ENCODE measurements at regions of chr1 and their contacts with region 1.

Region 1: DNA sequence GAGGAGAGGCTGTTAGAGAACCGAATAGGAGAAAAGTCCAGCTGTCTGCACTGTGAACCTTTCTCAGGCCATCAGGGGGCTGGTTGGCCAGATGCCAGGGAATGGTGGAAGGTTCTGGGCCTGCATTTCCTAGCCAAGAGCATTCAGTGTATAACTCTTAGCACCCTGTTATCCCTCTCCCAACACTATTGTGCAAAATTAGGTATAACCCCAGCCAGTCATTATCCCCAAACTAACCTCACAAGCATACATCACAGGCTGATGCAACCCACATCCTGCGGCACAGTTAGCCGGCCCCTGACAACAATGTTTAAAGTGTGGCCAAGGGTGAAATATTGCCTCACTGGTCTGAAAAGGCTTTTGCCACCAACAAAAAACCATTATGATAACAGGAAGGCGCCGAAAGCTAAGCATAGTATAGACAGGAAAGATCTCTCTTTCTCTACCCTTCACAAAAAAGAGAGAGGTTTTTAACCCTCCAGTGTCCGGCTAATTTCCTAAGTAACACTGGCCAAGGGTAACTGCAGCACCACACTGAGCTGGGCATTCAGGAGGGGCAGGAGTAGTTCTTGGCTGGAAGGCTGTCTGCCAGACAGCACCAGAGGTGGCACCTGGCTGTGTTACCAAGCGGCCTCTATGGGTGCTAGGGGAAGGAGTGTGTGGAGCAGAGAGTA is 77.3 kb upstream of the BCAR3 start:
- DNase-seq: peak; percentile 89
- ATAC-seq: peak; percentile 62
- H3K4me3 ChIP-seq: no peak overlapping the region
- H3K27ac ChIP-seq: peak overlapping the region; percentile 39; the same call in 1 of the 2 replicates
- H3K4me1 ChIP-seq: peaks cover 18% of the 10 kb centered on the region
- H3K27me3 ChIP-seq: no peaks in the 10 kb centered on the region; the same call in 1 of the 2 replicates
- CTCF ChIP-seq: no peak
- POLR2A ChIP-seq: no peak
- RAD21 ChIP-seq: no peak

Region 2: DNA sequence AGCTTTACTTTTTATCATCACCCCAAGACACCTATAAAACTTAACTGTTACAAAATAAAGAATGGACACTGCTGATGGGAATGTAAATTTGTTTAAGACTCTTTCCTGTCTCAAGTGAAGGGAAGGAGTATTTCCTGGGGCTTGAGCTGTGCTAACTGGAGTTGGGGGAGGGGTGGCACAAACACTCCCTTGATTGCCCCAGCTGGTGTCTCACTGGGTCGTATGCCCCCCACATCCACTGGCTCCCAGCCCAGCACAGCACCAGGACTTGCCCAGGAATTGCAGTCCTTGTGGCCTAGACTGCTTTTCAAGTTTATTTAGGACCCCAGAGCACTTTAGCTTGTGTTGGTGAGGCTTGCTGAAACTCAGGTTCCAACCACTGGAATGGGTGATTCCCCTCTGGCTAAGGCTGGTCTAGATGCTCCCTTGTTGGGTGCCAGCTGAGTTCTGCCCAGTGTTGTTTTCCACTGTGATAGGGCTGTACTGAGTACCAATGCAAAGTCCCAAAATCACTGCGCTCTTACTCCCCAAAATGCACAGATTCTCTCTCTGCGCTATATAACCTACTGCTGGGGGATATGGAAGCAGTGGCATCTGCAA is 462.3 kb before region 1 on chr1:
- CTCF ChIA-PET with region 1: no interaction called
- POLR2A ChIA-PET with region 1: no interaction called
- dilution Hi-C with region 1: no loop called
- in situ Hi-C with region 1: no loop called
- intact Hi-C with region 1: no loop called
- DNase-seq: no peak
- ATAC-seq: no peak
- H3K4me3 ChIP-seq: no peak overlapping the region
- H3K27ac ChIP-seq: no peak overlapping the region
- H3K4me1 ChIP-seq: no peaks in the 10 kb centered on the region
- H3K27me3 ChIP-seq: no peaks in the 10 kb centered on the region
- CTCF ChIP-seq: no peak
- POLR2A ChIP-seq: no peak
- RAD21 ChIP-seq: no peak

Region 3: GRCh38 chr1:93680757-93681550 is 78.0 kb before region 1 on chr1:
- CTCF ChIA-PET with region 1: no interaction called
- POLR2A ChIA-PET with region 1: no interaction called
- dilution Hi-C with region 1: no loop called
- in situ Hi-C with region 1: no loop called
- intact Hi-C with region 1: loop called (anchors 2 kb)
- DNase-seq: peak; percentile 89
- ATAC-seq: peak; percentile 75
- H3K4me3 ChIP-seq: peak overlapping the region; percentile 57
- H3K27ac ChIP-seq: peak overlapping the region; percentile 67
- H3K4me1 ChIP-seq: peaks cover 21% of the 10 kb centered on the region
- H3K27me3 ChIP-seq: no peaks in the 10 kb centered on the region
- CTCF ChIP-seq: peak; percentile 62
- POLR2A ChIP-seq: no peak
- RAD21 ChIP-seq: peak; percentile 66

Region 4: DNA sequence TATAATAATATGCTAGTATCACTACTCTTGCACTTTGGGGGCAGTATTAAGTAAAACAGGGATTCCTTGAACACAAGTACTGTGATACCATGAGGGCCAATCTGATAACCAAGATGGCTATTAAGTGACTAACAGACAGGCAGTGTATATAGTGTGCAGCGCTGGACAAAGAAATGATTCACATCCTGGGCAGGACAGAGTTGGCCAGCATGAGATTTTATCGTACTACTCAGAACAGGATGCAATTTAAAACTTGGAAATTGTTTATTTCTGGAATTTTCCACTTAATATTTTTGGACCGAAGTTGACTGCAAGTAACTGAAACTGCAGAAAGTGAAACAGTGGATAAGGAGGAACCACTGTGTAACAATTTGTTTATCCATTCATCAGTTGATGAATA is 45.4 kb after region 1 on chr1:
- CTCF ChIA-PET with region 1: no interaction called
- POLR2A ChIA-PET with region 1: no interaction called
- dilution Hi-C with region 1: no loop called
- in situ Hi-C with region 1: no loop called
- intact Hi-C with region 1: loop called (anchors 5 kb)
- DNase-seq: peak; percentile 95
- ATAC-seq: peak; percentile 93
- H3K4me3 ChIP-seq: peak overlapping the region; percentile 37; the same call in 1 of the 2 replicates
- H3K27ac ChIP-seq: 0 out of 2 replicates have a peak overlapping the region, but pooled peaks have one; percentile 34
- H3K4me1 ChIP-seq: peaks cover 7% of the 10 kb centered on the region
- H3K27me3 ChIP-seq: no peaks in the 10 kb centered on the region
- CTCF ChIP-seq: no peak
- POLR2A ChIP-seq: no peak
- RAD21 ChIP-seq: 0 out of 2 replicates have a peak, but pooled peaks have one; percentile 10

Measured in IMR-90 (cell line).